Sciatic nerve (tissue), 2 donors: ENCODE measurements at regions of chr9 and their contacts with region 1.

Region 1: DNA sequence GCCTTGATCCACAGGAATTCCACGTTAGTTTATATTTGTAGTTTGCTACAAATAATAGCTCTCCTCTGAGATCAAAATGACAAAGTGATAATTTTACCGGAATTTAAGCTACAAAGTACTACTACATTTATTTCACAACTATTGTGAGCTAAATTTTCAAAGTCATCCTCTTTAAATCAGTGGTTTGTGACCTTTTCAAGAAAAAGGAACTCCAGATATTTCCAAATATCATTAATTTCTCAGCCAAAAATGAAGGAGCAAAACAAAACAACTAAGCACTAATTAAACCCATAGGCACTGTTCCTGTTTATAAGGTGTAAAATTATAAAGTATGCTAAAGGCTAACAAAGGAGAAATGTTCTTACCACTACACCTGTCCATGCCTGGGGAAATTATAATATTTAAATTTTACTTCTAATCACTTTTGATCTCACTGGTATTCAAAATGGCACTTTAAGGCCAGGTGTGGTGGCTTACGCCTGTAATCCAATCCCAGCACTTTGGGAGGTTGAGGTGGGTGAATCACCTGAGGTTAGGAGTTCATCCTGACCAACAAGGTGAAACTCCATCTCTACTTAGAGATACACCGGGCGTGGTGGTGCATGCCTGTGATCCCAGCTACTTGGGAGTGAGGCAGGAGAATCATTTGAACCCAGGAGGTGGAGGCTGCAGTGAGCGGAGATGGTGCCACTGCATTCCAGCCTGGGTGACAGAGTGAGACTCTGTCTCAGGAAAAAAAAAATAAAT is 77.5 kb downstream of the CEMIP2 start:
- DNase-seq: no peak
- ATAC-seq: no peak

Region 2: GRCh38 chr9:71620746-71621145 is 70.1 kb before region 1 on chr9:
- intact Hi-C with region 1: no loop called
- DNase-seq: no peak
- ATAC-seq: no peak

Region 3: DNA sequence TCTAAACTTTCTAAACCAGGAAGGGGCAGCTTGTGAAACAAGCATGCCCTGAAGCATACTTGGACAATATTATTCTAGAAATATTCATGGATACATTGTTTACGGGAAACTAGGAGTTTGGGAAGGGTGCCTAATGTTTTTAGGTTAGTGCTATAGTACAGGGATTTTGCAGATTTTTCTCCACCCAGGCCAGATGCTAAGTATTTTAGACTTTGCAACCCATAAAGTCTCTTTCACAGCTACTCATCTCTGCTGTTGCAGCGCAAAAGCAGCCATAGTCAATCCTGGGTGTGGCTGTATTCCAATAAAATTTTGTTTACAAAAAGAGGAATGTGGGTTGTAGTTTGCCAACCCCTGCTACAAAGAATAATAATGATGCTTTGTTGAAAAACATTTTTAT is 28.8 kb before region 1 on chr9:
- intact Hi-C with region 1: loop called (anchors 1 kb)
- DNase-seq: no peak
- ATAC-seq: no peak

Region 4: GRCh38 chr9:71703172-71703872 is 12.5 kb after region 1 on chr9:
- intact Hi-C with region 1: loop called (anchors 1 kb)
- DNase-seq: no peak
- ATAC-seq: peak; percentile 62

Region 5: DNA sequence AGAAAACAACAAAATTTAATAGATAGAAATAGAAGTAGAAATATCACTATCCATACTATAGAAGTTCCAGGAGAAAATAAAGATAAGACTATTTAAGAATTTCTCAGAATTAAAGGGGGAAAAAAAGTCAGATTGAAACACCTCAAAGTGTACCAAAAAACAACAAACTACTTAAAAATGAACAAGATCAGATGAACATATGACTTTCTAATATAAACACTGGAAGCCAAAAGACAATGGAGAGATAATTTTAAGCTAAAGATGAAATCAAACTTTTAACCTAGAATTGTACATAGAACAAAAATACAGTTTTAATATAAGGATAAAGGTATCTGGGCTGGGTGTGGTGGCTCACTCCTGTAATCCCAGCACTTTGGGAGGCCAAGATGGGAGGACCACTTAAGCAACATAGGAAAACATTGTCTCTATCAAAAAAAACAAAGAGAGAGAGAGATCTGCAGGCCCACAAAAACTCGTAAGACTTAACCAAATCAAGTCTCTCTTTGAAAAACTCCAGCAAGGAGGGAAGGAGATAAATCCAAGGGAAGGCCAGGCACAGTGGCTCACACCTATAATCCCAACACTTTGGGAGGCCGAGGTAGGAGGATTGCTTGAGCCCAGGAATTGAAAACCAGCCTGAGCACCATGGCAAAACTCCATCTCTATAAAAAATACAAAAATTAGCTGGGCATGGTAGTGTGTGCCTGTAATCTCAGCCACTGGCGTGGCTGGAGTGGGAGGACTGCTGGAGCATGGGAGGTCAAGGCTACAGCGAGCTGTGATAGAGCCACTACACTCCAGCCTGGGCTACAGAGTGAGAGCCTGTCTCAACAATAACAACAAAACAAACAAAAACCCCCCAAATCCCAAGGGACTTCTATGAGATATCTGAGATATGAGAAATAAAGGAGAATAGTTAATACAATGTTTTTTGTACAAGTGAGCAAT is 187.7 kb after region 1 on chr9:
- intact Hi-C with region 1: no loop called
- DNase-seq: no peak
- ATAC-seq: no peak